CD8-positive, alpha-beta T cell (primary cell): ENCODE measurements at regions of chr3 and their contacts with region 1.

Region 1: GRCh38 chr3:48400824-48401433 is 28.9 kb downstream of the FBXW12 start:
- DNase-seq: peak; percentile 29 to 87 (median 64)
- ATAC-seq: peak; percentile 90
- H3K4me3 ChIP-seq: no peak overlapping the region
- H3K4me3 Mint-ChIP-seq: no peak overlapping the region
- H3K27ac ChIP-seq: no peak overlapping the region
- H3K27ac Mint-ChIP-seq: no peak overlapping the region
- H3K4me1 ChIP-seq: no peaks in the 10 kb centered on the region
- H3K4me1 Mint-ChIP-seq: no peaks in the 10 kb centered on the region
- H3K27me3 ChIP-seq: no peaks in the 10 kb centered on the region
- H3K27me3 Mint-ChIP-seq: peaks cover 3% of the 10 kb centered on the region
- CTCF ChIP-seq: peak; percentile 87

Region 2: GRCh38 chr3:48217449-48217848 is 183.5 kb before region 1 on chr3:
- CTCF ChIA-PET with region 1: no interaction called
- POLR2A ChIA-PET with region 1: no interaction called
- intact Hi-C with region 1: no loop called
- DNase-seq: no peak
- ATAC-seq: no peak
- H3K4me3 ChIP-seq: no peak overlapping the region
- H3K4me3 Mint-ChIP-seq: no peak overlapping the region
- H3K27ac ChIP-seq: no peak overlapping the region
- H3K27ac Mint-ChIP-seq: no peak overlapping the region
- H3K4me1 ChIP-seq: no peaks in the 10 kb centered on the region
- H3K4me1 Mint-ChIP-seq: no peaks in the 10 kb centered on the region
- H3K27me3 ChIP-seq: no peaks in the 10 kb centered on the region
- H3K27me3 Mint-ChIP-seq: no peaks in the 10 kb centered on the region
- CTCF ChIP-seq: no peak

Region 3: DNA sequence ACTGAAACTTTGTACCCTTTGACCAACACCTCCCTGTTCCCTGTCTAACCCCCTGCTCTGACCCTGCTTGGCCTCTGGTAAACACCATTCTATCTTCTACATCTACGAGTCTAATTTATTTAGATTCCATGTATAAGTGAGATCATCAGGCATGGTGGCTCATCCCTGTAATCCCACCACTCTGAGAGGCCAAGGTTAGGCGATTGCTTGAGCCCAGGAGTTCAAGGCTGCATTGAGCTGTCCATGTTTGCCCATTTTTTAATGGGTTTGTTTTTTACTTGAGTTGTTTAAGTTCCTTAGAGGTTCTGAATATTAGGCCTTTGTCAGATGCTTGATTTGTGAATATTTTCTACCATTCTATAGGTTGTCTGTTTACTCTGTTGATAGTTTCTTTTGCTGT is 12.0 kb before region 1 on chr3:
- CTCF ChIA-PET with region 1: interaction called, 12 read pairs
- POLR2A ChIA-PET with region 1: no interaction called
- intact Hi-C with region 1: no loop called
- DNase-seq: no peak
- ATAC-seq: no peak
- H3K4me3 ChIP-seq: no peak overlapping the region
- H3K4me3 Mint-ChIP-seq: no peak overlapping the region
- H3K27ac ChIP-seq: no peak overlapping the region
- H3K27ac Mint-ChIP-seq: no peak overlapping the region
- H3K4me1 ChIP-seq: no peaks in the 10 kb centered on the region
- H3K4me1 Mint-ChIP-seq: no peaks in the 10 kb centered on the region
- H3K27me3 ChIP-seq: no peaks in the 10 kb centered on the region
- H3K27me3 Mint-ChIP-seq: peaks cover 21% of the 10 kb centered on the region
- CTCF ChIP-seq: no peak

Region 4: GRCh38 chr3:48446425-48447193 is 45.7 kb after region 1 on chr3 and contains the start of gene ATRIP:
- CTCF ChIA-PET with region 1: interaction called, 14 read pairs
- POLR2A ChIA-PET with region 1: no interaction called
- intact Hi-C with region 1: no loop called
- DNase-seq: peak; percentile 70 to 91 (median 86)
- ATAC-seq: peak; percentile 98
- H3K4me3 ChIP-seq: peak within 1 kb of the TSS; percentile 68 to 81
- H3K4me3 Mint-ChIP-seq: peak within 1 kb of the TSS; percentile 85
- H3K27ac ChIP-seq: peak within 1 kb of the TSS; percentile 67 to 74
- H3K27ac Mint-ChIP-seq: peak within 1 kb of the TSS; percentile 92
- H3K4me1 ChIP-seq: peaks cover 24% of the 10 kb centered on the region
- H3K4me1 Mint-ChIP-seq: peaks cover 42% of the 10 kb centered on the region
- H3K27me3 ChIP-seq: no peaks in the 10 kb centered on the region
- H3K27me3 Mint-ChIP-seq: no peaks in the 10 kb centered on the region
- CTCF ChIP-seq: no peak
- total RNA-seq, gene ATRIP: 7.4 to 8.7 TPM

Region 5: GRCh38 chr3:48507351-48508061 is 106.6 kb after region 1 on chr3:
- CTCF ChIA-PET with region 1: interaction called, 60 read pairs
- POLR2A ChIA-PET with region 1: no interaction called
- intact Hi-C with region 1: loop called (anchors 1 kb)
- DNase-seq: peak; percentile 53 to 88 (median 80)
- ATAC-seq: peak; percentile 87
- H3K4me3 ChIP-seq: no peak overlapping the region
- H3K4me3 Mint-ChIP-seq: peak overlapping the region; percentile 47
- H3K27ac ChIP-seq: peak overlapping the region in 1 of 2 experiments; percentile 25
- H3K27ac Mint-ChIP-seq: peak overlapping the region; percentile 72
- H3K4me1 ChIP-seq: peaks cover 36% of the 10 kb centered on the region
- H3K4me1 Mint-ChIP-seq: peaks cover 37% of the 10 kb centered on the region
- H3K27me3 ChIP-seq: no peaks in the 10 kb centered on the region
- H3K27me3 Mint-ChIP-seq: no peaks in the 10 kb centered on the region
- CTCF ChIP-seq: peak; percentile 72

Region 6: GRCh38 chr3:48548729-48549705 is 148.1 kb after region 1 on chr3:
- CTCF ChIA-PET with region 1: interaction called, 175 read pairs
- POLR2A ChIA-PET with region 1: interaction called, 8 read pairs
- intact Hi-C with region 1: loop called in 1 of 2 experiments (anchors 1 kb)
- DNase-seq: peak; percentile 66 to 92 (median 82)
- ATAC-seq: peak; percentile 100
- H3K4me3 ChIP-seq: no peak overlapping the region
- H3K4me3 Mint-ChIP-seq: no peak overlapping the region
- H3K27ac ChIP-seq: no peak overlapping the region
- H3K27ac Mint-ChIP-seq: no peak overlapping the region
- H3K4me1 ChIP-seq: no peaks in the 10 kb centered on the region
- H3K4me1 Mint-ChIP-seq: peaks cover 8% of the 10 kb centered on the region
- H3K27me3 ChIP-seq: no peaks in the 10 kb centered on the region
- H3K27me3 Mint-ChIP-seq: no peaks in the 10 kb centered on the region
- CTCF ChIP-seq: peak; percentile 78

Region 7: GRCh38 chr3:48685602-48686511 is 284.9 kb after region 1 on chr3 and contains the start of gene NCKIPSD:
- CTCF ChIA-PET with region 1: interaction called, 5 read pairs
- POLR2A ChIA-PET with region 1: no interaction called
- intact Hi-C with region 1: loop called in 1 of 2 experiments (anchors 5 kb)
- DNase-seq: peak; percentile 81 to 97 (median 91)
- ATAC-seq: peak; percentile 92
- H3K4me3 ChIP-seq: peak within 1 kb of the TSS; percentile 63 to 85
- H3K4me3 Mint-ChIP-seq: peak within 1 kb of the TSS; percentile 93
- H3K27ac ChIP-seq: peak within 1 kb of the TSS; percentile 58 to 82
- H3K27ac Mint-ChIP-seq: peak within 1 kb of the TSS; percentile 91
- H3K4me1 ChIP-seq: peaks cover 18% of the 10 kb centered on the region
- H3K4me1 Mint-ChIP-seq: peaks cover 22% of the 10 kb centered on the region
- H3K27me3 ChIP-seq: no peaks in the 10 kb centered on the region
- H3K27me3 Mint-ChIP-seq: no peaks in the 10 kb centered on the region
- CTCF ChIP-seq: peak; percentile 93
- total RNA-seq, gene NCKIPSD: 7.7 to 8.1 TPM